OCI-LY7 (cell line): ENCODE measurements at regions of chr2 and their contacts with region 1.

Region 1: DNA sequence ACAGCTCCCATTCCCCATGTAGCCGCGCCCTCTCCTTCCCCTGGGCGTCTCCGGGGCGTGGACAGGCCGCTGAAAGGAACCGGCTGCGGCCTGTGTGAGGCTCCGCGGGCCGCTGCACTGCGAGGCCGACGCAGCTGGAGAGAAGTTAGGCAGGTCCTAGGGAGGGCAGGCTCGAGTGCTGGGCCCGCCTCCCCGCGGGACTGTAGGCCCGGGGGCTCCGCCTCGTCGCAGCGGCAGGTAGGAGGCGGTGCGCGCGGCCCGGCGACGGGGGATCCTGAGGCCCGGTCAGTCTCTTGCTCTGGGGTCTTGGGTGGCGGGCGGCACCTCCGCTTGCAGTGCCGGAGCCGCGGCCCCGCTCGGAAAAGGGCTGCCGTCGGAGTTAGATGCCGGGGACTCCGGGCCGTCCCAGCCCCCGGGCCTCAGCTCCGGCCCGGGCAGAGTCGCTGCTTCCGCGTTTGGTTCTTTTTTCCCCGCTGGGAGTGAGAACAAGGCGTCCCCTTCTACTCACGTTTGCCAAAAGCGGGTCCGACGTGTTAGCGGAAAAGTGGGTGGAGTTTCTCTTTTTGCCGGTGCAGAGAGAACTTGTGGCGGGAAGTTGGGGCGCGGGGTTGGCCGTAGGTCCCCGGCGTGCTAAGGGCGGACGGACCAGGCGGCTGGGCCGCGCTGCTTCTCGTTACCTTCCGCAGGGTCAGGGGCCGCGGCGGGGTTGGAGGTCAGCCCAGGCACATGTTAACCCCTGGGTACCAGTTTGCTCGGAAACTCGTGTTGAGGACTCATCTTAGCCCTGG is at the start of gene VRK2:
- DNase-seq: peak; percentile 93
- H3K4me3 ChIP-seq: peak within 1 kb of the TSS; percentile 76
- H3K27ac ChIP-seq: peak within 1 kb of the TSS; percentile 85
- H3K4me1 ChIP-seq: peaks cover 24% of the 10 kb centered on the region
- CTCF ChIP-seq: no peak
- total RNA-seq, gene VRK2: 17.2 and 17.7 TPM in 2 replicates

Region 2: GRCh38 chr2:57156231-57156924 is 890.4 kb before region 1 on chr2:
- CTCF ChIA-PET with region 1: no interaction called
- POLR2A ChIA-PET with region 1: no interaction called
- intact Hi-C with region 1: no loop called
- DNase-seq: no peak
- H3K4me3 ChIP-seq: no peak overlapping the region
- H3K27ac ChIP-seq: no peak overlapping the region
- H3K4me1 ChIP-seq: no peaks in the 10 kb centered on the region
- CTCF ChIP-seq: no peak

Region 3: GRCh38 chr2:58067001-58067400 is 20.2 kb after region 1 on chr2:
- CTCF ChIA-PET with region 1: no interaction called
- POLR2A ChIA-PET with region 1: interaction called, 4 read pairs
- intact Hi-C with region 1: loop called (anchors 2 kb)
- DNase-seq: no peak
- H3K4me3 ChIP-seq: no peak overlapping the region
- H3K27ac ChIP-seq: no peak overlapping the region
- H3K4me1 ChIP-seq: no peaks in the 10 kb centered on the region
- CTCF ChIP-seq: no peak

Region 4: GRCh38 chr2:58240670-58241545 is 194.1 kb after region 1 on chr2 and contains the start of gene FANCL:
- CTCF ChIA-PET with region 1: no interaction called
- POLR2A ChIA-PET with region 1: no interaction called
- intact Hi-C with region 1: loop called (anchors 1 kb)
- DNase-seq: peak; percentile 90
- H3K4me3 ChIP-seq: peak within 1 kb of the TSS; percentile 77
- H3K27ac ChIP-seq: peak within 1 kb of the TSS; percentile 83
- H3K4me1 ChIP-seq: peaks cover 32% of the 10 kb centered on the region
- CTCF ChIP-seq: no peak
- total RNA-seq, gene FANCL: 33.0 and 36.9 TPM in 2 replicates